ENCODE measurements at regions of chr6 and their contacts with region 1.

Region 1: GRCh38 chr6:137799950-137800568 is 67.0 kb upstream of the TNFAIP3 start:
- DNase-seq: peak; percentile 75
- ATAC-seq: peak; percentile 74
- H3K4me3 Mint-ChIP-seq: no peak overlapping the region
- H3K27ac Mint-ChIP-seq: peak overlapping the region; percentile 60
- H3K4me1 Mint-ChIP-seq: peaks cover 64% of the 10 kb centered on the region
- H3K27me3 Mint-ChIP-seq: no peaks in the 10 kb centered on the region

Region 2: GRCh38 chr6:137512757-137513605 is 287.1 kb before region 1 on chr6:
- CTCF ChIA-PET with region 1: no interaction called
- POLR2A ChIA-PET with region 1: no interaction called
- DNase-seq: no peak
- ATAC-seq: no peak
- H3K4me3 Mint-ChIP-seq: no peak overlapping the region
- H3K27ac Mint-ChIP-seq: no peak overlapping the region
- H3K4me1 Mint-ChIP-seq: no peaks in the 10 kb centered on the region
- H3K27me3 Mint-ChIP-seq: peaks cover 65% of the 10 kb centered on the region

Region 3: DNA sequence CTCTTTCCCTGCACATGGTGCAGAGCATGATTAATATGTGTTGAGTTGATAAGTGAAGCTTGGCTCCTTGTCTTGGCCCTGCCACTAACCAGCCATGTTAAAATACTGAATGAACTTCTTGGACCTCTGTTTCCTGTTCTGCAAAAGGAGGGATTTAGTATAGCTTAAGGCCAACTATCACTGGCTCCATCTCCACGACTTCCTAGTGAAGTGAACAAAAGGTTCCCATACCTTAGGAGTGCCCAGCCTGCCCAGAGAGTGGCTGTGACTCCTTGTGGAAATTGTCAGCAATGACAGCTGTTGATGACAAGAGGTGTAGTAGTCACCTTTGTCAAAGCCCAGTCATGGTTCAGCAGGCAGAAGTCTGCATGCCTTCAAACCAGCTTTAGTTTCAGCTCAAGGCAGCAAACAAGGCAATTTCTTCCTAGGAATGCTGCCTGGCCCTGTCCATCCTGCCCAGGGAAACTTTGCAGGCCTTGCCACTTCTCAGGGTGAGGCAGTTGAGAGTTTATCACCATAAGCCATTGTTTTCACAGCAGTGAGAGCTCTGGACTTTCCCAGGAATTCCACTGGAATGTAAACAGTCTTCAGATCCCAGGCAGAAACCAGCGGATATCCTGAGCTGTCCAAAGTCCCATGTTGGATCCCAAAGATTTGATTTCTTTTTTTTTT is 102.7 kb before region 1 on chr6:
- CTCF ChIA-PET with region 1: interaction called, 12 read pairs
- POLR2A ChIA-PET with region 1: interaction called, 3 read pairs
- DNase-seq: no peak
- ATAC-seq: peak; percentile 17
- H3K4me3 Mint-ChIP-seq: no peak overlapping the region
- H3K27ac Mint-ChIP-seq: no peak overlapping the region
- H3K4me1 Mint-ChIP-seq: peaks cover 38% of the 10 kb centered on the region
- H3K27me3 Mint-ChIP-seq: peaks cover 5% of the 10 kb centered on the region

Region 4: DNA sequence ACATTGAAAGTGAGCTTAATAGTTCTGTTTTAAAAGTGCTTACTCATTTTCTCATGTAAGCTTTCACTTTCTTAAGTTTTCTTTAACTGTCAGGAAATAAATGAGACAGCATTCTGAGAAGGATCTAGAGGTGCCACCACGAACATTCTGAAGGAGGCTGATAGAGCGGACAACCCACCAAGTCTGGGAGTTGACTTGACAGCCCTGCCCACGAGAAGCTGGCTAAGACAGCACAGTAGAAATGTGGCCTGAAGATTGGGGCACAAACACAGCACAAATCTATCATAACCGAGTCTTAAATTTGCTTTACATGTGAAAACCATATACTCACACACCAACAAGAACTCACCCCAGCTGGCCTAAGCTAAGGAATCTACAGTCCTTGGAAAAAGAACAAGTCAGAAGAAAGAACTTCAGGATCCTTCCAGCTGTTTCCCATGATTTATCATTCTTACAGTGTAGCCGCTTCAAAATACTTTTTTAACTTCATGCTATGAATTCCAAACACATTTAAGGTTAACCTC is 77.2 kb before region 1 on chr6:
- CTCF ChIA-PET with region 1: interaction called, 37 read pairs
- POLR2A ChIA-PET with region 1: interaction called, 3 read pairs
- DNase-seq: no peak
- ATAC-seq: peak; percentile 69
- H3K4me3 Mint-ChIP-seq: no peak overlapping the region
- H3K27ac Mint-ChIP-seq: no peak overlapping the region
- H3K4me1 Mint-ChIP-seq: peaks cover 24% of the 10 kb centered on the region
- H3K27me3 Mint-ChIP-seq: peaks cover 7% of the 10 kb centered on the region

Region 5: GRCh38 chr6:137811121-137811915 is 11.3 kb after region 1 on chr6:
- CTCF ChIA-PET with region 1: interaction called, 88 read pairs
- POLR2A ChIA-PET with region 1: interaction called, 13 read pairs
- DNase-seq: peak; percentile 84
- ATAC-seq: peak; percentile 95
- H3K4me3 Mint-ChIP-seq: peak overlapping the region; percentile 35
- H3K27ac Mint-ChIP-seq: peak overlapping the region; percentile 72
- H3K4me1 Mint-ChIP-seq: peaks cover 42% of the 10 kb centered on the region
- H3K27me3 Mint-ChIP-seq: no peaks in the 10 kb centered on the region

Region 6: DNA sequence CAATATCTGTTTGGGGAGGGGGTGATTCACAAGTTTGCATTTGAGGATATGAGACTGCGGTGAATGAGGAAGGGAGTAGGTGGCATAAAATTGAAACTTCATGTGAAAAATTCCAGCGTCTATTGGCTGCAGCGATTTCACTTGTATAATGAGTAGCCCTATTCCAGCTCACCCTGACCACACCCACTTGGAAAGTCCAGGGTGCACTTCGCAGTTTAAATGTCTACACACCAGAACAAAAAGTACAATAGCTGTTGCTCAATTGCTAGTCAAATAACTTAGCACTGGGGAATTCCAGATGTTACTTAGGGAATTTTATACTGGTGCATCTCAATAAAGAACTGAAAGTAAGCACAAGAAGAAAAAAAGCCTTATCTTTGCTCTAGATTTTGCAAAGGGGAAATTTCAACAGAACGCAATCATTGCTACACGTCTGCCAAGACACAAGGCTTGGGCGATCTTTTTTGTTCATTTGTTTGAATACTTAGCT is 73.3 kb after region 1 on chr6:
- CTCF ChIA-PET with region 1: interaction called, 399 read pairs
- POLR2A ChIA-PET with region 1: interaction called, 69 read pairs
- DNase-seq: peak; percentile 44
- ATAC-seq: no peak
- H3K4me3 Mint-ChIP-seq: peak overlapping the region; percentile 94
- H3K27ac Mint-ChIP-seq: peak overlapping the region; percentile 42
- H3K4me1 Mint-ChIP-seq: peaks cover 83% of the 10 kb centered on the region
- H3K27me3 Mint-ChIP-seq: no peaks in the 10 kb centered on the region

Region 7: DNA sequence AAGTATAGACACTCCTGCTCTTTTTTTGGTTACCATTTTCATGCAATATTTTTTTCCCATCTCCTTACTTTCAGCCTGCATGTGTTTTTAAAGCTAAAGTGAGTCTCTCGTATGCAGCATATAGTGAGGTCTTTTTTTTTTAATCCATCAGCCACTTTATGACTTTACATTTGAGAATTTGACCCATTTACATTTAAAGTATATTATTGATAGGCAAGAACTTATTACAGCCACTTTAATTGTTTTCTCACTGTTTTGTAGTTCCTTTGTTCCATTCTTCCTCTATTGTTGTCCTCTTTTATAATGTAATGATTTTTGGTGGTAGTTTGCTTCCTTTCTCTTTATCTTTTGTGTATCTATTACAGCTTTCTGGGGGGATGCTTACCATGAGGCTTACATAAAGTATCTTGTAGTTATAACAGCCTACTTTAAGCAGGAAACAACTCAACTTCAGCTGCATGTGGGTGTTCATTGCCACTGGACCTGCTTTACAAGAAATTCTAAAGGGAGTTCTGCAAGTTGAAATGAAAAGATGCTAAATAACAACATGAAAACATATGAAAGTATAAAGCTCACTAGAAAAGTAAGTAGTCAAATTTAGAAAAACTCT is 138.8 kb after region 1 on chr6:
- CTCF ChIA-PET with region 1: interaction called, 49 read pairs
- POLR2A ChIA-PET with region 1: no interaction called
- DNase-seq: no peak
- ATAC-seq: no peak
- H3K4me3 Mint-ChIP-seq: no peak overlapping the region
- H3K27ac Mint-ChIP-seq: no peak overlapping the region
- H3K4me1 Mint-ChIP-seq: peaks cover 18% of the 10 kb centered on the region
- H3K27me3 Mint-ChIP-seq: no peaks in the 10 kb centered on the region

Region 8: GRCh38 chr6:138013959-138014358 is 213.9 kb after region 1 on chr6:
- CTCF ChIA-PET with region 1: no interaction called
- POLR2A ChIA-PET with region 1: no interaction called
- DNase-seq: no peak
- ATAC-seq: no peak
- H3K4me3 Mint-ChIP-seq: no peak overlapping the region
- H3K27ac Mint-ChIP-seq: no peak overlapping the region
- H3K4me1 Mint-ChIP-seq: no peaks in the 10 kb centered on the region
- H3K27me3 Mint-ChIP-seq: peaks cover 9% of the 10 kb centered on the region

Measured in activated CD8-positive, alpha-beta T cell treated with anti-CD3 and anti-CD28 coated beads, Interleukin-2, amount 10 ng/mL, durations not matched to agents 7 days and 5 days (primary cell).